Ovary (tissue), 10 donors: ENCODE measurements at regions of chr12 and their contacts with region 1.

Region 1: GRCh38 chr12:76242813-76243540 is 105.2 kb downstream of the BBS10 start:
- DNase-seq: no peak
- H3K4me3 ChIP-seq: no peak overlapping the region
- H3K27ac ChIP-seq: no peak overlapping the region
- H3K4me1 ChIP-seq: no peaks in the 10 kb centered on the region
- H3K27me3 ChIP-seq: no peaks in the 10 kb centered on the region
- CTCF ChIP-seq: no peak
- EP300 ChIP-seq: no peak
- POLR2A ChIP-seq: no peak

Region 2: GRCh38 chr12:76094754-76095153 is 148.2 kb before region 1 on chr12:
- intact Hi-C with region 1: no loop called
- DNase-seq: no peak
- H3K4me3 ChIP-seq: no peak overlapping the region
- H3K27ac ChIP-seq: no peak overlapping the region
- H3K4me1 ChIP-seq: no peaks in the 10 kb centered on the region
- H3K27me3 ChIP-seq: no peaks in the 10 kb centered on the region
- CTCF ChIP-seq: no peak
- EP300 ChIP-seq: no peak
- POLR2A ChIP-seq: no peak

Region 3: DNA sequence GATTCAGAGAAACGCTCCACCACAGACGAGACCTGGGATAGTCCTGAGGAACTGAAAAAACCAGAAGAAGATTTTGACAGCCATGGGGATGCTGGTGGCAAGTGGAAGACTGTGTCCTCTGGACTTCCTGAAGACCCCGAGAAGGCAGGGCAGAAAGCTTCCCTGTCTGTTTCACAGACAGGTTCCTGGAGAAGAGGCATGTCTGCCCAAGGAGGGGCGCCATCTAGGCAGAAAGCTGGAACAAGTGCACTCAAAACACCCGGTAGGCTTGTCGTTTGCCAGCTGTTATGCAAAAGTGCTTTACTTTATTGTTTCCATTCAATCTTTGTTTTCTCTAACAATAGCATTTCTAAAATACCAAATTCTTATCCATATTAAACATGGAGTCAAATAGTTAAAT is 1875.1 kb after region 1 on chr12:
- intact Hi-C with region 1: loop called in 1 of 4 experiments (anchors 5 kb)
- DNase-seq: no peak
- H3K4me3 ChIP-seq: no peak overlapping the region
- H3K27ac ChIP-seq: no peak overlapping the region
- H3K4me1 ChIP-seq: no peaks in the 10 kb centered on the region
- H3K27me3 ChIP-seq: no peaks in the 10 kb centered on the region
- CTCF ChIP-seq: no peak
- EP300 ChIP-seq: no peak
- POLR2A ChIP-seq: no peak